AG04450 (cell line): ENCODE measurements at regions of chr1 and their contacts with region 1.

Region 1: GRCh38 chr1:11645670-11646265 is 8.5 kb downstream of the FBXO2 start:
- DNase-seq: peak; percentile 23
- H3K4me3 ChIP-seq: no peak overlapping the region
- H3K27ac ChIP-seq: no peak overlapping the region
- H3K27me3 ChIP-seq: peaks cover 25% of the 10 kb centered on the region
- CTCF ChIP-seq: peak; percentile 80

Region 2: GRCh38 chr1:11248155-11248554 is 397.6 kb before region 1 on chr1:
- CTCF ChIA-PET with region 1: interaction called, 283 read pairs
- POLR2A ChIA-PET with region 1: no interaction called
- DNase-seq: no peak
- H3K4me3 ChIP-seq: no peak overlapping the region
- H3K27ac ChIP-seq: no peak overlapping the region
- H3K27me3 ChIP-seq: no peaks in the 10 kb centered on the region
- CTCF ChIP-seq: no peak

Region 3: DNA sequence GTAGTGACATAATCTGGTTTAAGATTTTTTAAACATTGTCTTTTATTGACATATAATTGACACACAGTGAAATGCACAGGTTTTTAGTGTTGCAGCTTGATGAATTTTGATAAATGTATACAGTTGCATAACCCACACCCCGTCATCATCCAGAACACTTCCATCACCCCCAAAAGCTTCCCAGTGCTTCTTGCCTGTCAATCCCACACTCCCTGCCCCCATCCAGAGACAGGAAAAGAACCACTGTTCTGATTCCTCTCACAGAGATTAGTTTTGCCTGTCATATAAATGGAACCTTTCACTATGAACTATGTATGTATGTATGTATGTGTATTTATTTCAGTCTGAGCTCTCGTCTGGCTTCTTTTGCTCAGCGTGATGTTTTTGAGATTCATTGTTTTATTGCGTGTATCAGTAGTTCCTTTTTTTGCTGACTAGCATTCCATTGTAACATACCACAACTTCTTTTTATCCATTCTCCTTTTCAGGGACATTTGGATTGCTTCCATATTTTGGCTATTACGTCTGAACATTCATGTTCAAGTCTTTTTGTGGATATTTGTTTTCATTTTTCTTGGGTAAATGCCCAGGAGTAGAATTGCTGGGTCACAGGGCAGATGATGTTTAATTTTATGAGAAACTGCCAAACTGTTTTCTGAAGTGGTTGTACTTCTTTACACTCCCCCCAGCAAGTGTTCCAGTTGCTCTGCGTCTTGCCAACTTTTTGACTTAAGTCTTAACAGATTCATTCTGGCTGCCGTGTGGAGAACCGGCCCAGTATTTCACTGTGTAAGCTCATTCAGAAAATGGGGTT is 364.0 kb before region 1 on chr1:
- CTCF ChIA-PET with region 1: interaction called, 13 read pairs
- POLR2A ChIA-PET with region 1: no interaction called
- DNase-seq: peak; percentile 89
- H3K4me3 ChIP-seq: no peak overlapping the region
- H3K27ac ChIP-seq: peak overlapping the region; percentile 73
- H3K27me3 ChIP-seq: no peaks in the 10 kb centered on the region
- CTCF ChIP-seq: no peak

Region 4: DNA sequence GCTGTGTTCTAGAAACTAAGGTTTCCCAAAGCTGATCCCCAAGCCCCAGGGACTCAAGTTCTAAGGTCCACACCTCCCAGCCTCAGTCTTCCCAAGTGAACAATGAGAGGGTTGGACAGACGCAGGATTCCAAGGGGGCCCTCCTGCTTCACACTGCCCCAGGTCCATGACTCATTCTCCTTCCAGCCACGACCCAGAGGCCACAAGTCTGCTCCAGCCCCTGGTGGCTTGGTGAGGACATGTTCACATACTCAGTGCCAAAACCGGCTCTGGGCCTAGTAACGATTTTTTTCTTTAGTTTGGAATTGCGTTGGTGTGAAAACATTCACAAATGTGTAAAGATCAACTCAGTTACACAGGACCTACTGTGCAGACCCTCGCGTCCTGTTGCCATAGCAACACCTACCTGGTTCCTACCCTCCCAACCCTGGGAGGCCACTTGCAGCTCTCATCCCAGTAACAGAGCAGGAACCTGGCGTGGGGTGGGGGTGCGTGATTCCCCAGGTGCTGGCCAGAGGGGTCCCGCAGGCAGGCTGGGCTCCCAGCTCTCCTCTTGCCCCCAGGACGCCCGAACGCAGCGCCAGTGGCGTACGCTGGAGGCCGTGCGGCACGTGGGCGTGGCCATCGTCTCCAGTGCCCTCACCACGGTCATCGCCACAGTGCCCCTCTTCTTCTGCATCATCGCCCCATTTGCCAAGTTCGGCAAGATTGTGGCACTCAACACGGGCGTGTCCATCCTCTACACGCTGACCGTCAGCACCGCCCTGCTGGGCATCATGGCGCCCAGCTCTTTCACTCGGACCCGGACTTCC is 109.8 kb before region 1 on chr1:
- CTCF ChIA-PET with region 1: no interaction called
- POLR2A ChIA-PET with region 1: no interaction called
- DNase-seq: no peak
- H3K4me3 ChIP-seq: no peak overlapping the region
- H3K27ac ChIP-seq: no peak overlapping the region
- H3K27me3 ChIP-seq: peaks cover 3% of the 10 kb centered on the region
- CTCF ChIP-seq: no peak

Region 5: DNA sequence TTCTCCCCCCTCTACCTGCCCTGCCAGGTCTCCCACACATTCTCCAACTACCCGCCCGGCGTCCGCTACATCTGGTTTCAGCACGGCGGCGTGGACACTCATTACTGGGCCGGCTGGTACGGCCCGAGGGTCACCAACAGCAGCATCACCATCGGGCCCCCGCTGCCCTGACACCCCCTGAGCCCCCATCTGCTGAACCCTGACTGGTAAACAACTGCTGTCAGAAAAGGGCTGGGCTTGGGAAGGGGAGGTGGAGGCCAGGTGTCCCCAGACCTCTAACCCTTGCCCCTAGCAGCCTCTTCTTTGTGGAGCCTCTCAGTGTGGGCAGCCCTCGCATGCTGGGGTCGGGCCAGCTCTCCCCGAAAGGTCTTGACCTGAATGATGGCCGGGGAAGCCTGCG is 15.3 kb after region 1 on chr1:
- CTCF ChIA-PET with region 1: interaction called, 11 read pairs
- POLR2A ChIA-PET with region 1: interaction called, 4 read pairs
- DNase-seq: no peak
- H3K4me3 ChIP-seq: no peak overlapping the region
- H3K27ac ChIP-seq: no peak overlapping the region
- H3K27me3 ChIP-seq: no peaks in the 10 kb centered on the region
- CTCF ChIP-seq: no peak

Region 6: DNA sequence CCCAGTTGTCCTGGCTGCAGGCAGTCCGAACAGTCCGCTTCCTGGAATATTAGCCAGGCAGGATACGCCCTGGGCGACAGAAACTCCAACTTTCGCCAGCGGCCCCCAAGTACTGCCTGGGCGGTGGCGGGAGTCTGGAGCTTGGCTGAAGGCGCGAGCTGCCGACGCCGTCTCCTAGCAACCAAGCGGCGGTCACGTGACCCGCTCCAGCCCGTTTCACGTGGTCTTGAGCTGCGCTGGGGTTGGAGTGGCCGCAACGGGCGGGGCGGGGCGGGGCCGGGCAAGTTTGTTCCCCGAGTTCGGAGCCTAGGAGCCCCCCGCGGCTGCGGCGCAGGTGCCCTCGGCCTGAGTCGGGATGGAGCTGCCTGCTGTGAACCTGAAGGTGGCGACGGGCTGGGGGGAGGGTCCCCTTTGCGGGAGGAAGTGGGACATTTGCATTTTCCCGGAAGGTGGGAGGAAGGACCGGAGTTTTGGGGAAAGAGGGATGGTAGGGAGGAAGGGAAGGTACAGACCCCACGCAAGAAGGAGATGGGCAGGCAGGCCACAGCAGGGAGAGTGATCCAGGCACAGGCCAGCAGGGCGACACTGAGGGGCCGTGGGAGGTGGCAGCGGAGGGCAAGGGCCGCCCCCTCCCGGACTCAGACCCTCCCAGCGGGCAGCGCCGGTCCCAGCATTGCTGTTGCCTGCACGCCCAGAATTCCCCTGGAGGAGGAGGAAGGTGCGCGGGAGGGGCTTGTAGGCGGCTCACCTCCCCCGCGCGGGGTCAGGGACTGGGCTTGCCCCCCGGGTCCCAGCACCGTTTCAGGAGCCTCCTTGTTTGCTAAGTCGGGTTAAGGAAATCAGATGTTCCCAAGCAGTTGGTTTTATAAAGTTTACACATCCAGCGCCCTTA is 90.3 kb after region 1 on chr1 and contains the start of gene AGTRAP:
- CTCF ChIA-PET with region 1: interaction called, 11 read pairs
- POLR2A ChIA-PET with region 1: no interaction called
- DNase-seq: peak; percentile 67
- H3K4me3 ChIP-seq: peak within 1 kb of the TSS; percentile 100
- H3K27ac ChIP-seq: peak within 1 kb of the TSS; percentile 93
- H3K27me3 ChIP-seq: no peaks in the 10 kb centered on the region
- CTCF ChIP-seq: 0 out of 2 replicates have a peak, but pooled peaks have one; percentile 5
- polyA plus RNA-seq, gene AGTRAP: 26.8 and 39.0 TPM in 2 replicates